Activated CD4-positive, alpha-beta T cell treated with anti-CD3 and anti-CD28 coated beads, Interleukin-2, amount 10 ng/mL, durations not matched to agents 24 days and 14 days (primary cell): ENCODE measurements at regions of chr20 and their contacts with region 1.

Region 1: GRCh38 chr20:58309575-58310290 is at the start of gene RAB22A:
- DNase-seq: peak; percentile 95
- H3K4me3 Mint-ChIP-seq: peak within 1 kb of the TSS; percentile 97
- H3K27ac Mint-ChIP-seq: peak within 1 kb of the TSS; percentile 94
- H3K4me1 Mint-ChIP-seq: peaks cover 50% of the 10 kb centered on the region
- H3K27me3 Mint-ChIP-seq: no peaks in the 10 kb centered on the region
- total RNA-seq, gene RAB22A: 16.5 and 17.4 TPM in 2 replicates

Region 2: DNA sequence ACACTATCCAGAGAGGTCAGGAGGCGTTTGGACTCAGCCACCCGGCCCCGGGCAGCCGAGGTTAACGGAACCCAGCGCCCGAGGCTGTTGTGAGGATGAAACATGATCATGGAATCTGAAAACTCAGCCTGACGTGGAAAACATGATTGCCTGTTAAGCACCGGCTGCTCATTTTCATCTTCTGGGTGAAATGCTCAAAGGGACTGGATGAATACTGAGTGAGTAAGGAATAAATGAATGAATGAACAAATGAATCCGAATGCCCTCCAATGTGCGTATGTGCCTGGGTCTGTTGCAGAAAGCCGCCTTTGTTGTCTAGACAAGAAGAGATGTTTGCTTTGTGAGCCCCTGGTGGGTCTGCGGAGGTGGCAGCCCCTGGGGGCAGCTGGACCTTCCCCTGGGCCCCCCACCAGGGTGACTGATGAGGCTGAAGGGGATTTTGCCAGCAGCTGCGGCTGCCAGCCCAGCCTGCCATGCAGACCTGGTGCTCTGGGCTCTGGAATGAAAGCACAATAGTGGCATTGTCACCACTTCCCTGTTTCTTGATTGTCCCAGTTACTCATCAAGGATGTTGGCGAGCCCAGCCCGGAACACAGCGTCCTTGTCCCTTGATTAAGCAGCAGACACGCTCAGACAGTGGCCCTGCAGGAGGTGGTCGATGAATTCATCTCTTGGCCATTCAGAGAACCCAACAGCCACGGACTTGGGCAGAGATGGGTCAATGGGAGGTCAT is 292.3 kb before region 1 on chr20:
- intact Hi-C with region 1: no loop called
- DNase-seq: no peak
- H3K4me3 Mint-ChIP-seq: no peak overlapping the region
- H3K27ac Mint-ChIP-seq: no peak overlapping the region
- H3K4me1 Mint-ChIP-seq: peaks cover 8% of the 10 kb centered on the region
- H3K27me3 Mint-ChIP-seq: peaks cover 4% of the 10 kb centered on the region

Region 3: DNA sequence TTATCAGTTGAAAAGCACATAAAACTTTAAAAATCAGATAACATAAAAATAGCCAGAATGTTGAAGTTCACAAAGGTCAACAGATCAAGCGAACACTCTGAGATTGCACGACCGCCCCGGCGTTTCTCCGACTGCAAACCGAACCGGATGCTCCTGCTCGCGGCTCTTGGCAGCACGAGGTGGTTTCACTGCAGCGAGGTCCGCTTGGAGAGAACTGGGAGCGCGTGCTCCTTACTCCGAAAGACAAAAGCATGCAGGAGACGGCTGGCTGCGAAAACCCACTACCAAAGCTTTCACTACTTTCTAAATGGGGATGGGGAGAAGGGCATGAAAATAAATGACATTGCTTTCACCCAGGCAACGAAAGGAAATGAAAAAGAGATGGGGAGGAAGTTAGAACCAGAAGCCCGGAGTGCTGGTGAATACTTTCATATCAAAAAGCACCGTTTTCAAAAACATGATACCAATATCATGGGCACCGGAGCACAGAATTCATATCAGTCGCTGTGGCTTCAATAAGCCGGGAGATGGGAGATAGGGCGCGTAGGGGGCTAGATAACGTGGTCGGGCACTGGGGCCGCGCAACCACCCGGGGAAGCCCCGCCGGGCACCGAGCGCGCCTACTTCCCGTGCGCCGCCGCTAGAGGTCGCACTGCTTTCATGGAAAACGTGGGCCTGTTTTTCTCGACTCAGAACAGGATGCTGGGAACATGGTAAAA is 73.0 kb before region 1 on chr20:
- intact Hi-C with region 1: loop called (anchors 1 kb)
- DNase-seq: peak; percentile 96
- H3K4me3 Mint-ChIP-seq: peak overlapping the region; percentile 91
- H3K27ac Mint-ChIP-seq: peak overlapping the region; percentile 94
- H3K4me1 Mint-ChIP-seq: peaks cover 23% of the 10 kb centered on the region
- H3K27me3 Mint-ChIP-seq: no peaks in the 10 kb centered on the region

Region 4: DNA sequence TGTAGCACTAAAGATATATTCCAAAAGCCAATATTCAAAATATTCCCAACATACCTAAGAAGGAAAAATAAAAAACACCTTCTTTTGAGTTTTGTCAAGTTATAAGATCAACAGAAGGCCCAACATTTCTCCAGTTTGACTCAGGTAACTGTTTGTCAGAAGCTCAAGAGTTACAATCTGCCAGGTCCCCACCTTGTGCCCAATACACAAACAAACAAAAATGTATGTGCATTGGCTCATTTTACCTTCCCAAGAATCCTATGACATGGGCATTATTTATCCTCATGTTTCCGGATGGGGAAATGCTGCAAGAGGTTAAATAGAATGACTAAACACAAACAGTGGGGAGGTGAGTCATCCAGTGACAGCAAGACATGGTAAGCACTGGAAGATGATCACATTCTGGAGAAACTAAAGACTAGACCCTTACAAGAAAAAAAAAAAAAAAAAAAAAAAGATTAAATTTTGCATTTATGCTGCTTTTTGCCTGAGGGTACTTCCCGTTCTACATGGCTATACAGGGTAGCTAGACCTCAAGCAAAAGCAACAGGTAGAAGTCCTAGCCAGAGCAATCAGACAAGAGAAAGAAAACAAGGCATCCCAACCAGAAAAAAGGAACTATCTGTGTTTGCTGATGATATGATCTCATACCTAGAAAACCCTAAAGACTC is 57.7 kb before region 1 on chr20:
- intact Hi-C with region 1: loop called (anchors 5 kb)
- DNase-seq: no peak
- H3K4me3 Mint-ChIP-seq: no peak overlapping the region
- H3K27ac Mint-ChIP-seq: peak overlapping the region; percentile 34
- H3K4me1 Mint-ChIP-seq: peaks cover 10% of the 10 kb centered on the region
- H3K27me3 Mint-ChIP-seq: no peaks in the 10 kb centered on the region

Region 5: DNA sequence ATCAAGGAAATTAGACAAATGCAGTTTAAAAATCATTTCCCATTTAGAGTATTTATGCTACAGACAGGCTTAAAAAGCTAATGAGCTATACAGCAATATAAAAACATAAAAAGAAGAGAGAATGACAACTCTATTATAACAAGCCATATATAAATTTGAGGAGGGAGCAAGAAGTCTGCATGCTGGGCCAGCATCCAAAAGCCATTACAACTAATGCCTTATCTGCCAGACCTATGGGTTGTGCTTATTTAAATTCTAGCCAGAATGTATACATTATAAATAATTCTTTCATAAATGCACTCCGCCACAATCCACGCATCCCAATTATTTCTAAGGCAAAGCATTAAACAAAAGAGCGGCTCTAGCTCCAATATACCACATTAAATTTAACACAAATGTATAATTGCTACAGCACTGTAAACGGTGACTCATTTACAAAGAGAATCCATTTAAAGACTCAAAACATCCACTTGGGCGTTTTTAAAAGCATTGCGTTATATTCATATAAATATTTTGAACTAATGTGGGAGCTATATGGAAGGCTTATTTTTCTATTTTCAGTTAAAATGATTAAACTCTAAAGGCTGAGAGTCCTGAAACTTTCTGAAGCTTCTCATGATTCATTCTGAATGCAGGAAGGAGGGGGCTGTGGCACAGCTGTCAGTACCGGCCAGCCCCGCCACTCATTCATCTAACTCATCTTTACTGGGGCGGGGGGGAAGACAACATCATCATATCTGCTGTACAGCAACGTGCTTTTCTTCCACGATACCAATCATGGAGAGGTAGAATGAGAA is 37.9 kb before region 1 on chr20:
- intact Hi-C with region 1: loop called (anchors 1 kb)
- DNase-seq: no peak
- H3K4me3 Mint-ChIP-seq: no peak overlapping the region
- H3K27ac Mint-ChIP-seq: peak overlapping the region; percentile 7
- H3K4me1 Mint-ChIP-seq: peaks cover 35% of the 10 kb centered on the region
- H3K27me3 Mint-ChIP-seq: no peaks in the 10 kb centered on the region

Region 6: GRCh38 chr20:58388882-58389323 is 79.2 kb after region 1 on chr20 and contains the start of gene VAPB:
- intact Hi-C with region 1: loop called (anchors 1 kb)
- DNase-seq: peak; percentile 99
- H3K4me3 Mint-ChIP-seq: peak within 1 kb of the TSS; percentile 89
- H3K27ac Mint-ChIP-seq: peak within 1 kb of the TSS; percentile 93
- H3K4me1 Mint-ChIP-seq: peaks cover 30% of the 10 kb centered on the region
- H3K27me3 Mint-ChIP-seq: peaks cover 12% of the 10 kb centered on the region
- total RNA-seq, gene VAPB: 35.0 and 36.5 TPM in 2 replicates

Region 7: GRCh38 chr20:58431134-58431533 is 121.4 kb after region 1 on chr20:
- intact Hi-C with region 1: no loop called
- DNase-seq: no peak
- H3K4me3 Mint-ChIP-seq: no peak overlapping the region
- H3K27ac Mint-ChIP-seq: no peak overlapping the region
- H3K4me1 Mint-ChIP-seq: peaks cover 28% of the 10 kb centered on the region
- H3K27me3 Mint-ChIP-seq: no peaks in the 10 kb centered on the region

Region 8: DNA sequence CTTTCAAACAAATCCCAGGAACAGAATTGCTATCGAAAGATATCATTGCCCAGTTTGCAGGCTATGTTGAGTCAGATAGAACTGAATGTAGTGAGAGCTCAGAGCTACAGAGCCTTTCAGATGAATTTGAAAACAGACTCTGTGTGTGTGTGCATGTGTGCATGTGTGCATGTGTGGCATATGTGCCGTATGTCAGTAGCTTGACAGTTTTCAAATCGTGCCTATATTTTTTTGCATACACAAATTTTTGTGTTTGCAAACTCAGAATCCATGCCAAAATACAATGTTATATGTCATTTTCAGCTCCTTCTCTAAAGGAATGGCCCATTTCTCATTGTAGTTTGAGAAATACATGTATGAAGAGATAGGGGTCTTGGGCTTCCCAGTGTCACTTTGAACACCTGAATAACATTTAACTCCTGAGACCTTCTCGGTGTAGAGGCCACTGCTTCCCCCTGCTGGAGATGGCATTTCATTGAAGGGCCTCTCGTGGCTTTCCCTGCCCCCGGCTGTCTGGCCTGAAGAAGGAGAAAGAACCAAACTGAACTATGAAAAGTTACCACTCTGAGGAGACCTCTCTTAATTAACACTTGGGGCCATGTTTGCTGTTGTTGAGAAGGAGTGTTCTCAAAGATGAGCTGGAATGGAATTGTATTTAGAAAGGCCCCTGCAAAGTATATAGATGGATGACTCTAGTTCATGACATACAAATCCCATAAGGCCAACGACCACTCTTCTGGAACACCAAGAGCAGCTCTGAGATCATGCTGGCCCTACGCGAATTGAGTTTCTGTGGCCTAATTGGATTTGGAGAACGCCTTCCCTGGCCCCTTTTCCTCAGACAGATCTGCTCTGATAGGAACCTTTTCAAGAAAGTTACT is 138.0 kb after region 1 on chr20:
- intact Hi-C with region 1: loop called (anchors 10 kb)
- DNase-seq: peak; percentile 88
- H3K4me3 Mint-ChIP-seq: no peak overlapping the region
- H3K27ac Mint-ChIP-seq: no peak overlapping the region
- H3K4me1 Mint-ChIP-seq: peaks cover 11% of the 10 kb centered on the region
- H3K27me3 Mint-ChIP-seq: no peaks in the 10 kb centered on the region

Region 9: DNA sequence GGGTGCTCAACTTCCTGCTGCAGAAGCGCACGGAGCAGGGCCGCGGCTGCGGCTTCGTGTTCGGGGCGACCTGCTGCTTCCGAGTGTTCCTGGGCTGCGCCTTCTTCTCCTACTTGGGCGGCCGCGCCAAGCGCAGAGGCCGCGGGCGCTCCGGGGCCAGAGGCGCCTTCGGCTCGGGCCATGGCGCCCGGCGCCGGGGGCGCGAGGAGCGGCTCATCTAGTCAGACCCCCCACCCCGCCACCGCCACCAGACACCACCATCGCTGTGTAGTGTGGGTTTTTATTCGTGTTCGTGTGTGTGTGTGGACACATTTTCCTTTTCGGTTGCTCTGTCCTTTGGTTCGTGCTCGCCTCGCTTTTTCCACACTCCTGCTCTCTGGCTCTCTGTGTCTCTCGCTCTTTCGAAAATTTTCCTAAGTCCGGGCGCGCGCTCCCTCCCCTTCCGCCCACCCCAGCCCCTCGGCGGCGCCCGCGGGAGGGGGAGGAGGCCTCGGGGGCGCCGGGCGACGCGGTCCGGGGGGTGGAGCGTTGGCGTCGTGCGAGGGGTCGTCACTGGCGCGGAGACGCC is 580.9 kb after region 1 on chr20:
- intact Hi-C with region 1: loop called (anchors 5 kb)
- DNase-seq: peak; percentile 87
- H3K4me3 Mint-ChIP-seq: peak overlapping the region; percentile 94
- H3K27ac Mint-ChIP-seq: peak overlapping the region; percentile 97
- H3K4me1 Mint-ChIP-seq: peaks cover 38% of the 10 kb centered on the region
- H3K27me3 Mint-ChIP-seq: no peaks in the 10 kb centered on the region